Activated CD8-positive, alpha-beta T cell treated with anti-CD3 and anti-CD28 coated beads for 36 hours (primary cell): ENCODE measurements at regions of chr5 and their contacts with region 1.

Region 1: GRCh38 chr5:154405078-154405792 is 40.6 kb upstream of the SAP30L start:
- DNase-seq: peak; percentile 86
- ATAC-seq: peak; percentile 100
- H3K4me3 Mint-ChIP-seq: peak overlapping the region; percentile 53
- H3K27ac Mint-ChIP-seq: no peak overlapping the region
- H3K4me1 Mint-ChIP-seq: peaks cover 7% of the 10 kb centered on the region
- H3K27me3 Mint-ChIP-seq: no peaks in the 10 kb centered on the region
- CTCF ChIP-seq: peak; percentile 89

Region 2: DNA sequence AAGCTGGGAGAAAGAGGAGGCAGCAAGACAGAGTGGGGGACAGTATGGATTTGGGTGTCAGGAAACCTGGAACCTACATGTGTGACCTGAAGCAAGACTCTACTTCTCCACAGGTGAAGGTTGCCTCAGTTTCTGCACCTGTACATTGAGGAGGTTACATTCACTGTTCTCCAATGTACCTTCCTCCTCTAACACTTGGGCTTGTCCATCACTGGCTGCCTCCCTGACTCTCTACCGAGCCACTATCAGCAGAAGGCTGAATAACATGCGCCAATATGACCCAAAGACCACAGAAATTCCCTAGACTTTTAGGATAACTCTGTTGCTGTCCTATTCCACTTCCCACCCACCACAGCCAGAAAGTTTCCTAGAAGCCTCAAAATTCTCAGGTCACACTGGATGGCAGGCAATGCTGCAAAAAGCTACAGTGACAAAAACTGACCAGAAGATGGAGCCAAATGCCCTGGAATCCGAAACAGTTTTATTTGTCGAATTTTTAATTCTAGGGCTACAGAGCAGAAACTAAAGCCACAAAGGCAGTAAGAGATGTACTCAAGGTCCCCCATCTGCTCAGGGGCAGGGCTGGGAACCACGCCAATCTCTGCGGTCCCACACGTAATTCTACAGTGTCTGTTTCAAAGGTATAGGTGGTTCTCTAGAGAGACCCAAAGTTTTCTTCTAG is 431.0 kb before region 1 on chr5:
- CTCF ChIA-PET with region 1: interaction called, 43 read pairs
- POLR2A ChIA-PET with region 1: no interaction called
- intact Hi-C with region 1: loop called (anchors 10 kb)
- DNase-seq: peak; percentile 39
- ATAC-seq: peak; percentile 62
- H3K4me3 Mint-ChIP-seq: no peak overlapping the region
- H3K27ac Mint-ChIP-seq: no peak overlapping the region
- H3K4me1 Mint-ChIP-seq: no peaks in the 10 kb centered on the region
- H3K27me3 Mint-ChIP-seq: peaks cover 4% of the 10 kb centered on the region
- CTCF ChIP-seq: peak; percentile 76

Region 3: DNA sequence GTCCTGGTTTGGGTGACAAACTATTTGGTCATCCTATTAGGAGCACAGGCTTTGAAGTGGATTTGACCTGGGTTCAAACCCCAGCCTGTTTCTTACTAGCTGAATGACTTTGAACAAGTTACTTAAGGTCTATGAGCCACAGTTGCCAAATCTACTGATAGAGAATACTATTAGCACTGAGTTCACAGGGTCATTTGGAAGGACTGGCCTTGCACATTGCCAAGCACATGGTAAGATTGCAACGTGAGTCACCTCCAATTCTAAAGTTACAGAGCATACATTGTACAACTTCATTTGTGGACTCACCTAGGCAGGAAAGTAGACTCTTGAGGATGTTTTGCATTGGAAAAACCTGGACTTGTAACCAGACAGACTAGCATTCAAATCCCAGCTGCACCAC is 327.5 kb before region 1 on chr5:
- CTCF ChIA-PET with region 1: interaction called, 132 read pairs
- POLR2A ChIA-PET with region 1: interaction called, 4 read pairs
- intact Hi-C with region 1: loop called (anchors 1 kb)
- DNase-seq: no peak
- ATAC-seq: no peak
- H3K4me3 Mint-ChIP-seq: no peak overlapping the region
- H3K27ac Mint-ChIP-seq: no peak overlapping the region
- H3K4me1 Mint-ChIP-seq: peaks cover 7% of the 10 kb centered on the region
- H3K27me3 Mint-ChIP-seq: no peaks in the 10 kb centered on the region
- CTCF ChIP-seq: no peak

Region 4: GRCh38 chr5:154189819-154190594 is 215.2 kb before region 1 on chr5:
- CTCF ChIA-PET with region 1: interaction called, 26 read pairs
- POLR2A ChIA-PET with region 1: no interaction called
- intact Hi-C with region 1: no loop called
- DNase-seq: peak; percentile 78
- ATAC-seq: peak; percentile 85
- H3K4me3 Mint-ChIP-seq: peak overlapping the region; percentile 75
- H3K27ac Mint-ChIP-seq: peak overlapping the region; percentile 43
- H3K4me1 Mint-ChIP-seq: peaks cover 28% of the 10 kb centered on the region
- H3K27me3 Mint-ChIP-seq: peaks cover 7% of the 10 kb centered on the region
- CTCF ChIP-seq: peak; percentile 66

Region 5: DNA sequence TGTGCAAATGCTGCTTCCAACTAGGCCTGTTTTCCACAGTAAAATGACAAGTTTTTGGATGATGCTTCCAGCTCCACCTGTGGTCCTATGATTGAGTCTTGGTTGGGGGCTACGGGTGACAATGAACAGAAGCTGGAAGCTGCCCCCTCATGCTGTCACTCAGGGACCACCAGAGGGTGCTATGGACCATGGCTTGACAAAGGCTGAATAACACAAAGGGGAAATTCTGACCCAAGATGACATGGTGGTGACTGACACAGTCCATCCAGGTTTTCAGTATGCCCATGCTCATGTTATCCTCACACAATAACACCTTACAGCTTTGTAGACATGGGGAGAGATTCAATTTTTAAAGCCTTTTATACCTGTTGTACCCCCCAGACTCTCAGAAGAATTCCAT is 16.6 kb after region 1 on chr5:
- CTCF ChIA-PET with region 1: interaction called, 12 read pairs
- POLR2A ChIA-PET with region 1: interaction called, 3 read pairs
- intact Hi-C with region 1: no loop called
- DNase-seq: peak; percentile 58
- ATAC-seq: no peak
- H3K4me3 Mint-ChIP-seq: no peak overlapping the region
- H3K27ac Mint-ChIP-seq: no peak overlapping the region
- H3K4me1 Mint-ChIP-seq: peaks cover 3% of the 10 kb centered on the region
- H3K27me3 Mint-ChIP-seq: no peaks in the 10 kb centered on the region
- CTCF ChIP-seq: no peak

Region 6: GRCh38 chr5:154449786-154450185 is 44.6 kb after region 1 on chr5:
- CTCF ChIA-PET with region 1: no interaction called
- POLR2A ChIA-PET with region 1: no interaction called
- intact Hi-C with region 1: no loop called
- DNase-seq: no peak
- ATAC-seq: no peak
- H3K4me3 Mint-ChIP-seq: no peak overlapping the region
- H3K27ac Mint-ChIP-seq: no peak overlapping the region
- H3K4me1 Mint-ChIP-seq: peaks cover 32% of the 10 kb centered on the region
- H3K27me3 Mint-ChIP-seq: no peaks in the 10 kb centered on the region
- CTCF ChIP-seq: no peak